ENCODE measurements at regions of chr16 and their contacts with region 1.

Region 1: GRCh38 chr16:64641343-64641742 is 480.5 kb downstream of the CDH11 start:
- DNase-seq: no peak
- H3K4me3 ChIP-seq: no peak overlapping the region
- H3K27ac ChIP-seq: no peak overlapping the region
- H3K4me1 ChIP-seq: no peaks in the 10 kb centered on the region
- H3K27me3 ChIP-seq: no peaks in the 10 kb centered on the region
- CTCF ChIP-seq: no peak
- POLR2A ChIP-seq: no peak

Region 2: DNA sequence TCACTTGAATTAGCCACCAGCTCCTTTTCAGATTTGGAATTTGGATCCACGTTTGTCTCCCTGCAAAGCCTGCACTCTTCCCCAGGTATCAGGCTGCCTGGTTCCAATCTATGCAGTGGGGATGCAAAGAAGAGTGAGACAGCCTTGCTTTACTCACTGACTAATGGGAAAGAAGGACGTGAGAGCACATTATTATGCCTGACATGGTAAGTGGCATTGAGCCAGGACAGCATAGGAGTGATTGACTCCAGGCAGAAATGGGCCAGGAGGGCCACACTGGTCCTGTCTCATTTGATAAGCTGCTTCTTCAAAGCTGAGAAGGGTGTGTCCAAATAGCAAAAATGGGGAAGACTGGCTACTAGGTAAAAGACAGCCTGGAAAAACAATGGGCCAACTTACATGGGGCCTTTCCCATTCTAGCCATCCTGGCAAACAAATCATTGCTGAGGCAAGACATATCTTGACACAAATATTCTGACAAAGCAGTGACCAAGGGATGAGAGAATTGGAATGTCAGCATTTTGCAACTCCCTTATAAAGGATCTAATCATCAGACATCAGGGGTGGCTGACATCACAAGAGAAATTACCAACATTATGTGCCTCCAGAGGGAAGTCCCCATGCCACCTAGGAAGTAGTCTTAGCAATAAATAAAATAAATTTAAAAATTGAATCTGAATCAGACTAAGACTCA is 442.0 kb after region 1 on chr16:
- intact Hi-C with region 1: loop called (anchors 5 kb)
- DNase-seq: no peak
- H3K4me3 ChIP-seq: no peak overlapping the region
- H3K27ac ChIP-seq: no peak overlapping the region
- H3K4me1 ChIP-seq: no peaks in the 10 kb centered on the region
- H3K27me3 ChIP-seq: no peaks in the 10 kb centered on the region
- CTCF ChIP-seq: no peak
- POLR2A ChIP-seq: no peak